ENCODE measurements at regions of chr18 and their contacts with region 1.

Region 1: GRCh38 chr18:62198259-62198658 is 11.2 kb downstream of the RELCH start:
- H3K4me3 ChIP-seq: no peak overlapping the region
- H3K27ac ChIP-seq: no peak overlapping the region
- H3K4me1 ChIP-seq: peaks cover 10% of the 10 kb centered on the region
- CTCF ChIP-seq: no peak

Region 2: GRCh38 chr18:62128157-62128556 is 70.1 kb before region 1 on chr18:
- CTCF ChIA-PET with region 1: no interaction called
- POLR2A ChIA-PET with region 1: no interaction called
- H3K4me3 ChIP-seq: no peak overlapping the region
- H3K27ac ChIP-seq: no peak overlapping the region
- H3K4me1 ChIP-seq: 0 out of 2 replicates have a peak, but pooled peaks cover 2% of the 10 kb centered on the region
- CTCF ChIP-seq: no peak

Region 3: DNA sequence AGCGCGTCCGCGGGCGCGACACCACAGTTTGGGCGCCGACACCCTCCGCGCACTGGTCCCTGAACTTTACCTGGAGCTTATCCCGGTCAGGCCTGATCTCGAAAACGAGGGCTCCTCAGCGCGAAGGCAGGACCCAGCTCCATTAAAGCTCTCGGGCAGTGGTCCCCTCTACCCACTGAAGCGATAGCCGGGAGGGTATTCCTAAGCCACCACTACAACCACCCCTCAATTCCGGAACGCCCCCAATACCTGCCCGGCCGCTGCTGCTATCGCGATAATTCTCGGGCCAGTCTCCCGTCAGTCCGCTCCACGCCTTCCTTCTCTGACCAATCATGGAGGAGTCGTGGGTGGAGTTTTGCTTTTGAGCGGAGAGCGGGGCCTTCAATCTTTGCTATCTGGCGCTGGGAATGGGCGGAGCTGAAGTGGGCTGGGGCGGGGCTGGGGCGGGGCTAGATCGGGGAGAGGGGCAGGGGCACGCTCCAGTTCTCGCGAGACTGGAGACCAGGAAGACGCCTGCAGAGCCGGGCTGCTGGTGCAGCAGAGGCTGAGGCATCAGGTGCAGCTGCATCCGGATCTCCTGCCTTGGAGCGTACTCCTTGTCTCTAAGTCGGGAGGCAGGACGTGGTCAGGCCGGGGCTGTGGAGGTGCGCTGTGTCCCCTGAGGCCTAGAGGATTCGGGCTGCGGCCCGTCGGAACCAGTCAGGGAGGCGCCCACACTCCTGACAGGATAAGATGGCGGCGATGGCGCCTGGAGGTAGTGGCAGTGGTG is 11.3 kb before region 1 on chr18 and contains the starts of genes PIGN and RELCH:
- CTCF ChIA-PET with region 1: interaction called, 6 read pairs
- POLR2A ChIA-PET with region 1: interaction called, 23 read pairs
- H3K4me3 ChIP-seq: peak within 1 kb of the TSS; percentile 100
- H3K27ac ChIP-seq: peak within 1 kb of the TSS; percentile 91
- H3K4me1 ChIP-seq: peaks cover 10% of the 10 kb centered on the region
- CTCF ChIP-seq: no peak; the same call in 1 of the 2 replicates

Region 4: GRCh38 chr18:62239475-62239874 is 41.2 kb after region 1 on chr18:
- CTCF ChIA-PET with region 1: no interaction called
- POLR2A ChIA-PET with region 1: no interaction called
- H3K4me3 ChIP-seq: no peak overlapping the region
- H3K27ac ChIP-seq: no peak overlapping the region
- H3K4me1 ChIP-seq: no peaks in the 10 kb centered on the region
- CTCF ChIP-seq: no peak

Measured in HEK293 (cell line).